Heart left ventricle (tissue), 16 donors: ENCODE measurements at regions of chr19 and their contacts with region 1.

Region 1: DNA sequence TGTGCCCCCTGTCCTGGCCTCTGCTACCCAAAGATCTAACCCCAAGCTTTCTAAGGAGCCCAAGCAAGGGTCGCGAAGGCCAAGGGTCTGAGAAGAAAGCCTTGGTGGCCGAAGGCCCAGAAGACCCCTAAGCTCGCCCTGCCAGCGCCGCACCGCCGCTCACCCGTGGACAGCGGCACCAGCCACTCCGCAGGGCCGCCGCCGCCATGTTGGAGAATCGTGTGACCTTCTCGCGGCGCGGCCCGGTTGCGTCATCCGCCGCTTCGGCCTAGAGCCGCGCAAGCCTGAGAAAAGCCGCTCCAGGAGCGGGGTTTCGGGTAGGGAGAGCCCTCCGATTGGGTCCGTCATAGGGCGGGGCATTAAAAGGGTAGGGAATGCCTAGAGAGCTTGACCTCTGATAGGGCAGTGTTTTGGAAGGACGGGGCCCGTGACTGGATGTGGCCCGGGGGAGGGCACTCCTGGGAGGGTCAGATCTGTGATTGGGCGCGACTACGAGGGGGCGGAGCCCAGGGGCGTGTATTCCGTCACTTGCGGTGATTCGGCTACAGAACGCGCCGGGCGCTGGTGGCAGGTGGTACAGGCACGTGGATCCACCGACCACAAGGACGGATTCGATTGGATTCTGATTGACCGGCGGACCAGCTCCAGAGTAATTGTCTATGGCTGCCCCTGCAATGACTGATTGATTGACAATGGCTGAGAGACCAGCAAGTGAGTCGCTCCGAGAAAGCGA is at the start of gene TIMM44:
- DNase-seq: peak; percentile 99 to 100 (median 100)
- ATAC-seq: peak; percentile 98 to 100 (median 99)
- H3K4me3 ChIP-seq: peak within 1 kb of the TSS; percentile 52 to 100 (median 86)
- H3K27ac ChIP-seq: peak within 1 kb of the TSS; percentile 83 to 99 (median 94)
- H3K4me1 ChIP-seq: peaks cover 0 to 25% (median 15%) of the 10 kb centered on the region in 12 donors
- H3K27me3 ChIP-seq: no peaks in the 10 kb centered on the region
- CTCF ChIP-seq: peak in 1 of 12 donors; percentile 8
- POLR2A ChIP-seq: peak in 1 of 2 donors; percentile 85
- total RNA-seq, gene TIMM44: 55.9 to 99.9 (median 70.6) TPM

Region 2: DNA sequence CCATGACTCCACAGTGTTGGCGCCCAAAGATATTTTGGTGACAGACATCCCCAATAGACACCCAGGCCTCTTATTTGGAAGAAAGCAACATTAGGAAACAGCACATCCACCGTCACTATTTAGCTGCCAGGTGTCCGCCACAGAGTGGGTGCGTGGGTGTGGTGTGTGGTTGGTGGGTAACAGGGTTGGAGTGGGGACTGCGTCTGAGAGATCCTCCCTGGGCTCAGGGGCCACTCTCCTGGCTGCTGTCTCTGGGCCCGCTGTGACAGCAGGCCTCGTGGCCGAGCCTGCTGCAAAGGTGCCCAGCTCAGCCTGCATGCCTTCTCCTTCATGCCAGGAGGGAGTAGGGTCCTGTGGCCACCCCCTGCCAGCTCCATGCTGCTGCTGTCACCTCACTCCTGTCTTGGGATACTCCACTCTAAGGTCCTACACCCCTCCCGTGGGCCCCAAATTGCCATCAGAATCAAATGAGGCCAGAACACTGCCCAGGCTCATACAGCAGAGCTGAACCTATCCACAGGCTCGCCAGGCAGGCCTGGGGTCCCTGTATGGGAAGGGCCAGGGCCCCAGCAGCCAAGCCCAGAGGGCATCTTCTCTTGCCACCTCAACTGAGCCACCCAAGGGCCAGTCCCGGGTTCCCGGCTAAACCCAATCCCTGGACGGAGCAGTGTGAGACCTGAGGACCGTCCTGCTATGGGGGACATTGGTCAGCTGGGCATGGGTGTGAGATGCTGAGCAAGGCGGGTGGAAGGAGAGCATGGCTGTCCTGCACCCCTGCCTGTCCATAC is 24.6 kb after region 1 on chr19:
- intact Hi-C with region 1: no loop called
- DNase-seq: peak in 1 of 5 donors; percentile 27
- ATAC-seq: peak in 1 of 4 donors; percentile 3
- H3K4me3 ChIP-seq: no peak overlapping the region
- H3K27ac ChIP-seq: no peak overlapping the region
- H3K4me1 ChIP-seq: peaks cover 0 to 5% (median 0%) of the 10 kb centered on the region in 12 donors
- H3K27me3 ChIP-seq: no peaks in the 10 kb centered on the region
- CTCF ChIP-seq: no peak
- POLR2A ChIP-seq: no peak

Region 3: DNA sequence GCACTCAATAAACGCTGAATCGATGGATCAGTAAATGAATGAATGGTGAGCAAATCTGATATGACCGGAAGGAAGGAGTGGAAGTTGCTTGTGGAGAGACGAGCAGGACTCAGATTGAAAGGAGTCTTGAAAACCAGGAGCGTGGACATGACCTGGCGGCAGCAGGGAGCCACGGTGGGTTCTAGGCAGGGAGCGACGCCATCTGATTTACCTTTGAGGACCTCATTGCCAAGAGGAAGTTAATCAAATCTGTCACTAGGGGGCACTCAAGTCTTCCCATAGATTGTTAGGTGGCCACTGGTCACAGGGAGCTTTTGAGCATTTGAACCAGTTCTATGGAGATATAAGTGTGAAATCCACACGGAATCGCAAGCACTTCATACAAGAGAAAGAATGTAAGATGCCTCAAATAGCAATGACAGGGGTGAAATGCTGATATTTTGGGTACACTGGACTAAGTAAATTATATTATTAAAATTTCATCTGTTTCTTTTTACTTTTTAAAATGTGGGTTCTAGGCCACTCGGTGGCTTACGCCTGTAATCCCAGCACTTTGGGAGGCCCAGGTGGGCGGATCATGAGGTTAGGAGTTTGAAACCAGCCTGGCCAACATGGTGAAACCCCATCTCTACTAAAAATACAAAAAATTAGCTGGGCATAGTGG is 214.9 kb after region 1 on chr19:
- intact Hi-C with region 1: loop called in 6 of 10 experiments (anchors 5 to 10 kb)
- DNase-seq: peak in 4 of 5 donors; percentile 42 to 61 (median 50)
- ATAC-seq: peak; percentile 40 to 67 (median 60)
- H3K4me3 ChIP-seq: no peak overlapping the region
- H3K27ac ChIP-seq: no peak overlapping the region
- H3K4me1 ChIP-seq: peaks cover 0 to 15% (median 9%) of the 10 kb centered on the region in 12 donors
- H3K27me3 ChIP-seq: no peaks in the 10 kb centered on the region
- CTCF ChIP-seq: peak; percentile 59 to 81 (median 75)
- POLR2A ChIP-seq: no peak